ENCODE measurements at regions of chr11 and their contacts with region 1.

Region 1: DNA sequence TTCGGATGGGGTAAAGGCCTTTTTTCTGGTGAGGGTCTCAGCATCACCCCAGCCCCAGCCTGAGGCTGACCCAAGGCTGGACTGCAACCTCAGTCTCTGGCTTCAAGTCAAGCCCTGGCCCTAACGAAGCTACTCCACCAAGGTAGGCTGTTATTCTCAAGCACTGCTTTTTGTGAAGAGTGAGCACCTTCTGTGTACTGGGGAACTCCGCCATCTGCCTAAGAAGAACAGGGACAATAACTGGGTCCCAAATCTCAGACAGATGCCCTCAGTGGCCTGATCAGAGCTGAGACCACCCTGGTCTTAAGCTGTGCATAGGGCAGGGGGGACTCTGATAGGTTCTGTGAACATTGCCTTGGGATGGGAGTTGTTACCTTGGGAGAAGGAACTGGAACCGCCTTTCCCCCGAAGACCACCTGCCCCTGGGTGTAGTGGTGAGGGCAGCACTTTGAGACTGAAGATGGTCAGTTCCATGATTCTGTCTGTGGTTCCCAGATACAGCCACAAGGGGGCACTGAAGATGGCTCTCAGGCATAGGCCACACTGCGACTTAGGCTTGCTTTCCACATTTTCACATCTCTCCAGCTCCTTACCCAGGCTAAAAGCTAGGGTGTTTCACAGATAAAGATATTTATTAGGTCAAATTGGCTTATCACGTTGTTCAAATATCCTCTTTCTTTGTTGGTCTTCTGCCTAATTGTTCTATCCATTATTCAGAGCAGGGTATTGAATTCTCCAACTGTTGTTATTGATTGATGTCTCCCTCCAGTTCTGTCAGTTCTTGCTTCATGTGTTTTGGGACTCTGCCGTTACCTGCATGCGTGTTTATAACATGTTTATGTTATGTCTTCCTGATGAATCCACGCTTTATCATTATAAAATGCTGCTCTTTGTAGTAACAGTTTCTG is 11.8 kb upstream of the UVRAG start:
- DNase-seq: peak; percentile 81
- ATAC-seq: peak; percentile 93
- H3K4me3 Mint-ChIP-seq: no peak overlapping the region
- H3K27ac Mint-ChIP-seq: no peak overlapping the region
- H3K4me1 Mint-ChIP-seq: peaks cover 20% of the 10 kb centered on the region
- H3K27me3 Mint-ChIP-seq: peaks cover 4% of the 10 kb centered on the region

Region 2: GRCh38 chr11:75814686-75815344 is 11.6 kb after region 1 on chr11 and contains the start of gene UVRAG:
- CTCF ChIA-PET with region 1: interaction called, 57 read pairs
- POLR2A ChIA-PET with region 1: interaction called, 3 read pairs
- DNase-seq: peak; percentile 98
- ATAC-seq: peak; percentile 90
- H3K4me3 Mint-ChIP-seq: no peak within 1 kb of the TSS
- H3K27ac Mint-ChIP-seq: peak within 1 kb of the TSS; percentile 94
- H3K4me1 Mint-ChIP-seq: peaks cover 11% of the 10 kb centered on the region
- H3K27me3 Mint-ChIP-seq: peaks cover 5% of the 10 kb centered on the region
- total RNA-seq, gene UVRAG: 19.8 to 21.1 TPM

Region 3: DNA sequence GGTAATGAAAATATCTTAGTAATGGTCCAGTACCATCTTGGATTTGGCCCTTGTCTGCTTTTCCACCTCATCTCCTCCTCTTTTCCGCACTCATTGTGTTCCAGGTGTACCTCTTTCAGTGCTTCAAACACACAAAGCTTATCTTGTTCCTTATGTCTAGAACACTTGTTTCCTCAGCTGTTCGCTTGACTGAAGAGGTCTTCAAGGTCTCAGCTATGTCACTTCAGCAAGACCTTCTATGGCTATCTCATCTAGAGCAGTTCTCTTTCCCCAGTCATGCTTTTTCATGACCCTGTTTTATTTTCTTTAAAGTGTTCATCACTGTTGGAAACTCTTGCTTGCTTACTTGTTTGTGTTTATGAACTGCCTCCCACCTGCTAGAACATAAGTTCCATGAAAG is 59.3 kb after region 1 on chr11:
- CTCF ChIA-PET with region 1: interaction called, 97 read pairs
- POLR2A ChIA-PET with region 1: no interaction called
- DNase-seq: no peak
- ATAC-seq: no peak
- H3K4me3 Mint-ChIP-seq: no peak overlapping the region
- H3K27ac Mint-ChIP-seq: no peak overlapping the region
- H3K4me1 Mint-ChIP-seq: no peaks in the 10 kb centered on the region
- H3K27me3 Mint-ChIP-seq: no peaks in the 10 kb centered on the region

Region 4: GRCh38 chr11:75873417-75874221 is 70.5 kb after region 1 on chr11:
- CTCF ChIA-PET with region 1: interaction called, 97 read pairs
- POLR2A ChIA-PET with region 1: no interaction called
- DNase-seq: no peak
- ATAC-seq: no peak
- H3K4me3 Mint-ChIP-seq: no peak overlapping the region
- H3K27ac Mint-ChIP-seq: no peak overlapping the region
- H3K4me1 Mint-ChIP-seq: peaks cover 14% of the 10 kb centered on the region
- H3K27me3 Mint-ChIP-seq: no peaks in the 10 kb centered on the region

Measured in activated CD8-positive, alpha-beta T cell treated with anti-CD3 and anti-CD28 coated beads, Interleukin-2, amount 10 ng/mL, durations not matched to agents 7 days and 5 days (primary cell).